CD14-positive monocyte (primary cell): ENCODE measurements at regions of chr5 and their contacts with region 1.

Region 1: DNA sequence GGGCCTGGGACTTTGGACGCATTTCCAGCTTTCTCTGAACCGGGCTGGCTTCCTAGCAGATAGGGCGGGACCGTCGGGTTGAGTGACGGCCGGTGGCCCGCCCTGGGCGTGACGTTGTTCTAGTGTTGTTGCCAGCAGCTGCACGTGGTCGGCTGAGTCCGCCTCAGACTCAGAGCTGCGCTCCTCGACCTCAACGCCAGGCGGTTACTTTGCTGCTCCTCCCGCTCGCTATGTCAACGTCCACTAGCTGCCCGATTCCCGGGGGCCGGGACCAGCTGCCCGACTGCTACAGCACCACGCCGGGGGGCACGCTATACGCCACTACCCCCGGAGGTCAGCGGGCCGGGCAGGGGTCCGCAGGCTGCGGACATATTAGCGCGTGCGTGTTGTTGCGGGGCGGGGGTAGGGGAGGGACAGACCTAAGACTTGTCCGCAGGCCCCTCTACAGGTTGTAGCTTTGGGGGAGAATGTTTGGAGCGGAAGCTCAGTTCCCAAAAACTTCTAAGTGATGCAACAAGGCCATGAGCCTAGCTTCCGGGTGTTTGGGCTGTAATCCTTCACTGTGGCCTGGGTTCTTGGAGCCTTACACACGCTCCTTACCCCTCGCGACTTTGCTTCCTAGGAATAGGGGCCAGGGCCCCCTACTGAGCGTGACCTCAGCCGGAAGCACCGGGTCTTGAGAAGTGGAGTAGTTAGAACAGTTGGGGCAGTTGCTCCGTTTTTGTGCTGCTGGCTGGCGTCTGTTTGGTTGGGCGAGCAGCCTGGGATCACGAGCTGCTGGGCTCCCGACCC is at the start of gene EIF4EBP3:
- DNase-seq: peak; percentile 96 to 97 (median 96)
- H3K4me3 ChIP-seq: peak within 1 kb of the TSS; percentile 36 to 76 (median 69)
- H3K4me3 Mint-ChIP-seq: peak within 1 kb of the TSS; percentile 86 to 94
- H3K27ac ChIP-seq: peak within 1 kb of the TSS; percentile 91 to 98
- H3K27ac Mint-ChIP-seq: peak within 1 kb of the TSS; percentile 95 to 99 (median 98)
- H3K4me1 ChIP-seq: peaks cover 35 to 49% of the 10 kb centered on the region in 2 donors
- H3K4me1 Mint-ChIP-seq: peaks cover 44% of the 10 kb centered on the region
- H3K27me3 ChIP-seq: no peaks in the 10 kb centered on the region
- H3K27me3 Mint-ChIP-seq: no peaks in the 10 kb centered on the region
- CTCF ChIP-seq: peak; percentile 79
- polyA plus RNA-seq, gene EIF4EBP3: 22.8 to 46.0 (median 41.9) TPM

Region 2: DNA sequence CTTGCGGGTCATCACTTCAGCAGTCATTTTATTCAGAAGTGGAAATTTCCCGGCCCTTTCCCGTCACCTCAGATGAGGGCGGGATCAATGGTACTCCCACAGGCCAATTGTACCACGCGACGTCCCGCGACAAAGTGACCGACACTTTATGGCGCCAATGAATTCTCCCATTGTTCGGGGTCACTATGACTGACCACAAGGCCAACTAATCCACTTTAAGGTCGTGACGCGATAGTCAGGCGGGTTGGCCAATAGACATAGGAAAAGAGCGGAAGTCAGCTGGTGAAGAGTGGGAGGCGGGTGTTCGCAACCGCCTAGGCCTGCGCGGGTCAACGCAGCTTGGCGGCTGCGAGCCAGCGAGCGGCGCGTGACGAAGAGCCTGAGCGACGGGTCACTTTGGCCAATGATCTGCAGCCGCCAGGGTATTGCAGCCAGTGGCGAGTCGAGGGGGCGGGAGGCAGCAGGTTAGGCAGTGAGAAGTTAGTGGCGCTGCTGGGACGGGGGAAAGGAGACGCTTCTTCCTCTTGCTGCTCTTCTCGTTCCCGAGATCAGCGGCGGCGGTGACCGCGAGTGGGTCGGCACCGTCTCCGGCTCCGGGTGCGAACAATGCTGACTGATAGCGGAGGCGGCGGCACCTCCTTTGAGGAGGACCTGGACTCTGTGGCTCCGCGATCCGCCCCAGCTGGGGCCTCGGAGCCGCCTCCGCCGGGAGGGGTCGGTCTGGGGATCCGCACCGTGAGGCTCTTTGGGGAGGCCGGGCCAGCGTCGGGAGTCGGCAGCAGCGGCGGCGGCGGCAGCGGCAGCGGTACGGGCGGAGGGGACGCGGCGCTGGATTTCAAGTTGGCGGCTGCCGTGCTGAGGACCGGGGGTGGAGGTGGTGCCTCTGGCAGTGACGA is 146.1 kb before region 1 on chr5 and contains the start of gene ANKHD1:
- intact Hi-C with region 1: loop called in 1 of 2 experiments (anchors 10 kb)
- DNase-seq: peak; percentile 100
- H3K4me3 ChIP-seq: peak within 1 kb of the TSS; percentile 67 to 87 (median 86)
- H3K4me3 Mint-ChIP-seq: no peak within 1 kb of the TSS
- H3K27ac ChIP-seq: peak within 1 kb of the TSS; percentile 94
- H3K27ac Mint-ChIP-seq: peak within 1 kb of the TSS in 2 of 7 donors; percentile 92 to 93
- H3K4me1 ChIP-seq: peaks cover 23 to 32% of the 10 kb centered on the region in 2 donors
- H3K4me1 Mint-ChIP-seq: peaks cover 32% of the 10 kb centered on the region
- H3K27me3 ChIP-seq: no peaks in the 10 kb centered on the region
- H3K27me3 Mint-ChIP-seq: no peaks in the 10 kb centered on the region
- CTCF ChIP-seq: no peak
- polyA plus RNA-seq, gene ANKHD1: 29.0 to 110 (median 43.6) TPM

Region 3: GRCh38 chr5:140480310-140481014 is 67.2 kb before region 1 on chr5:
- intact Hi-C with region 1: no loop called
- DNase-seq: no peak
- H3K4me3 ChIP-seq: no peak overlapping the region
- H3K4me3 Mint-ChIP-seq: no peak overlapping the region
- H3K27ac ChIP-seq: no peak overlapping the region
- H3K27ac Mint-ChIP-seq: no peak overlapping the region
- H3K4me1 ChIP-seq: no peaks in the 10 kb centered on the region
- H3K4me1 Mint-ChIP-seq: no peaks in the 10 kb centered on the region
- H3K27me3 ChIP-seq: no peaks in the 10 kb centered on the region
- H3K27me3 Mint-ChIP-seq: no peaks in the 10 kb centered on the region
- CTCF ChIP-seq: no peak

Region 4: GRCh38 chr5:140639148-140639979 is 91.7 kb after region 1 on chr5 and contains the start of gene TMCO6:
- intact Hi-C with region 1: loop called in 1 of 2 experiments (anchors 5 kb)
- DNase-seq: peak; percentile 99
- H3K4me3 ChIP-seq: peak within 1 kb of the TSS; percentile 68 to 89 (median 86)
- H3K4me3 Mint-ChIP-seq: peak within 1 kb of the TSS; percentile 83 to 93
- H3K27ac ChIP-seq: peak within 1 kb of the TSS; percentile 86 to 89
- H3K27ac Mint-ChIP-seq: peak within 1 kb of the TSS; percentile 92 to 98 (median 96)
- H3K4me1 ChIP-seq: peaks cover 34 to 55% of the 10 kb centered on the region in 2 donors
- H3K4me1 Mint-ChIP-seq: peaks cover 51% of the 10 kb centered on the region
- H3K27me3 ChIP-seq: no peaks in the 10 kb centered on the region
- H3K27me3 Mint-ChIP-seq: peaks cover 0 to 7% (median 3%) of the 10 kb centered on the region in 3 donors
- CTCF ChIP-seq: peak; percentile 74
- polyA plus RNA-seq, gene TMCO6: 9.8 to 45.5 (median 12.6) TPM